IMR-90 (cell line): ENCODE measurements at regions of chr6 and their contacts with region 1.

Region 1: DNA sequence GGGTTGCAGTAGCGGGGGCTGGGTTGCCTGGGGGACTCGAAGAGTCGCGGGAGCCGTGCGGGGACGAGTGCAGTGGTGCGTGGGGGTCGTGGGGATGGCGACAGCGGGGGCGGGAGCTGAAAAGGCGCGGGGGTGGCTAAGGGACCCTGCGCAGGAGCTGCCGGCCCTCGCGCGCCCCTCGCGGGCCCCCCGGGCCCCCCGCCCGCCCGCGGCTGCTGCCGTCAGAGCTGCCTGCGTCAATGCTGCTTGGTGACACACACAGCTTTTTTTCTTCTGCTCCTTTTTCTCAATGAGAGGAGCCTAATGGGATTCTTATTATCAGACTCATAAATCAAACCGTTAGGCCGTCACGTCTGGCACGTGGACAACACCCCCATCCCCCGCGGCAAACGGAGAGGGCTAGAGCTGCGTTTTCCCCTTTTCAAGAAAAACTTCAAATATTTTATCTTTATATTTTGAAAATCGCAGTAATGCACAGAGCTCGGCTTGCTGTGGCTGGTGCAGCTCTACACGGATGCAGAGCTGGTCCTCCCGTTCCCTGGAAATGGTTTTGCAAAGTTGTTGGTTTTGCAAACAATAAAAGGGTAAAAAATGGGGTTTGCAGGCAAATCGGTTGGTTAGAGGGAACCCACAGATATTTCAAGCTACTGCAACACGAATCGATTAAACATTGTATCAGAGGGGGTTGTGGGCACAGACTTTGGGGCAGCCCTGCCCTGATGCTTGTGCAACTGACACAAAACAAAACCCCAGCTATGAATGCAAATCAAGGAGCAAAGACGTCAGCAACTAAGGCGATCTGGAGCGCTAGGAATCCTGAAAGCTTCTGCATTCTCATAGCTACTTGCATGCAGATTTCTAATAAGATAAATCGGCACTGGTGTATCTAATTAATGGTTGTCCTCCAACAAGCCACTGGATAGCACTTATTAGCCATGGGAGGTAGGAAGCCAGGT is 161.4 kb downstream of the TBXT start:
- DNase-seq: peak; percentile 94
- ATAC-seq: peak; percentile 65
- H3K4me3 ChIP-seq: peak overlapping the region; percentile 26
- H3K27ac ChIP-seq: peak overlapping the region; percentile 98
- H3K4me1 ChIP-seq: peaks cover 31% of the 10 kb centered on the region
- H3K27me3 ChIP-seq: no peaks in the 10 kb centered on the region
- CTCF ChIP-seq: no peak
- POLR2A ChIP-seq: no peak; the same call in 1 of the 2 replicates
- RAD21 ChIP-seq: peak; percentile 12; the same call in 1 of the 2 replicates

Region 2: DNA sequence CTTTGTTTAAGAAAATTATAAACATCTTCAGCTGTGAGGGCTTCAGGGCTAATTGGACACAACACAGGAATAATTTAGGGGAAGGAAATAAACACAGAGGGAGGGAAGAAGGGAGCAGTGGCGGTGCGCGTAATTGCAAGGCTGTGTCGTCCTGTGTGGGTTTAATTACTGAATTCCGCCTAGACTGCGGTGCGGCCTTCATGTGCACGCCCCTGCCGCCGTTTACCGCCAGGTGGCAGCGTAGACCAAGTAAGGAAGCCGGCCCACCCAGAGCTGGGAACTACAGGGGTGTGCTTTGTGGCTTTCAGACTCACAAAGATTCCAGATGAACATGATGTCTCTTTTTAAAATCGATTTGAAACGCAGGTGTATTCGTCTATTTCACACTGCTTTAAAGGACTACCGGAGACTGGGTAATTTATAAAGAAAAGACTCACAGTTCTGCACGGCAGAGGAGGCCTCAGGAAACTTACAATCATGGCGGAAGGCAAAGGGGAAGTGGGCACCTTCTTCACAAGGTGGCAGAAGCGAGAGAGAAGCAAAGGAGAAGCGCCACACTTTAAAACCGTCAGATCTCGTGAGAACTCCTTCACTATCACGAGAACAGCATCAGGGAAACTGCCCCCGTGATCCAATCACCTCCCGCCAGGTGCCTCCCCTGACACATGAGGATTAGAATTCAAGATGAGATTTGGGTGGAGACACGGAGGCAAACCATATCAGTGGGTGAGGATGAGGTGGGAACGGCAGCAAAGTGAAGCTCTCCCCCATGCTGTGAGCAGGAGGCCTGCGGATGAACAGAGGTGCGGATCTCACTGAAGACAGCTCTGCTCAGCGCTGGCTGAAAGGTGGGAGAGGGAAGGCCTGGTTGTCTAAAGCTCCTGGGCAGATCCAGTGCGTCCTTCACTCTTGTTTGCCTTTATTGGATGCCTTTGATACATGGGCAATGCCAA is 121.1 kb before region 1 on chr6:
- CTCF ChIA-PET with region 1: interaction called, 3 read pairs
- POLR2A ChIA-PET with region 1: no interaction called
- dilution Hi-C with region 1: no loop called
- in situ Hi-C with region 1: no loop called
- intact Hi-C with region 1: loop called (anchors 2 kb)
- DNase-seq: peak; percentile 68
- ATAC-seq: peak; percentile 96
- H3K4me3 ChIP-seq: no peak overlapping the region
- H3K27ac ChIP-seq: no peak overlapping the region
- H3K4me1 ChIP-seq: peaks cover 7% of the 10 kb centered on the region
- H3K27me3 ChIP-seq: no peaks in the 10 kb centered on the region
- CTCF ChIP-seq: peak; percentile 95
- POLR2A ChIP-seq: peak; percentile 46; the same call in 1 of the 2 replicates
- RAD21 ChIP-seq: peak; percentile 95

Region 3: GRCh38 chr6:165987483-165988301 is 18.5 kb before region 1 on chr6:
- CTCF ChIA-PET with region 1: no interaction called
- POLR2A ChIA-PET with region 1: no interaction called
- dilution Hi-C with region 1: no loop called
- in situ Hi-C with region 1: no loop called
- intact Hi-C with region 1: loop called (anchors 1 kb)
- DNase-seq: peak; percentile 98
- ATAC-seq: peak; percentile 84
- H3K4me3 ChIP-seq: peak overlapping the region; percentile 58
- H3K27ac ChIP-seq: peak overlapping the region; percentile 54
- H3K4me1 ChIP-seq: peaks cover 10% of the 10 kb centered on the region
- H3K27me3 ChIP-seq: no peaks in the 10 kb centered on the region
- CTCF ChIP-seq: peak; percentile 18; the same call in 1 of the 2 replicates
- POLR2A ChIP-seq: peak; percentile 56
- RAD21 ChIP-seq: peak; percentile 31

Region 4: GRCh38 chr6:166026586-166027126 is 20.4 kb after region 1 on chr6:
- CTCF ChIA-PET with region 1: interaction called, 4 read pairs
- POLR2A ChIA-PET with region 1: no interaction called
- dilution Hi-C with region 1: no loop called
- in situ Hi-C with region 1: no loop called
- intact Hi-C with region 1: loop called (anchors 2 kb)
- DNase-seq: no peak
- ATAC-seq: no peak
- H3K4me3 ChIP-seq: no peak overlapping the region
- H3K27ac ChIP-seq: 0 out of 2 replicates have a peak overlapping the region, but pooled peaks have one; percentile 4
- H3K4me1 ChIP-seq: peaks cover 30% of the 10 kb centered on the region
- H3K27me3 ChIP-seq: no peaks in the 10 kb centered on the region
- CTCF ChIP-seq: no peak
- POLR2A ChIP-seq: no peak
- RAD21 ChIP-seq: no peak

Region 5: GRCh38 chr6:166046226-166046625 is 40.0 kb after region 1 on chr6:
- CTCF ChIA-PET with region 1: no interaction called
- POLR2A ChIA-PET with region 1: no interaction called
- dilution Hi-C with region 1: no loop called
- in situ Hi-C with region 1: no loop called
- intact Hi-C with region 1: loop called (anchors 1 kb)
- DNase-seq: peak; percentile 96
- ATAC-seq: peak; percentile 96
- H3K4me3 ChIP-seq: no peak overlapping the region
- H3K27ac ChIP-seq: peak overlapping the region; percentile 85
- H3K4me1 ChIP-seq: peaks cover 13% of the 10 kb centered on the region
- H3K27me3 ChIP-seq: no peaks in the 10 kb centered on the region; the same call in 1 of the 2 replicates
- CTCF ChIP-seq: no peak
- POLR2A ChIP-seq: no peak
- RAD21 ChIP-seq: 0 out of 2 replicates have a peak, but pooled peaks have one; percentile 4

Region 6: GRCh38 chr6:166078294-166078693 is 72.1 kb after region 1 on chr6:
- CTCF ChIA-PET with region 1: no interaction called
- POLR2A ChIA-PET with region 1: no interaction called
- dilution Hi-C with region 1: no loop called
- in situ Hi-C with region 1: no loop called
- intact Hi-C with region 1: loop called (anchors 5 kb)
- DNase-seq: peak; percentile 96
- ATAC-seq: peak; percentile 98
- H3K4me3 ChIP-seq: no peak overlapping the region
- H3K27ac ChIP-seq: no peak overlapping the region
- H3K4me1 ChIP-seq: peaks cover 1% of the 10 kb centered on the region; the same call in 1 of the 2 replicates
- H3K27me3 ChIP-seq: peaks cover 4% of the 10 kb centered on the region; the same call in 1 of the 2 replicates
- CTCF ChIP-seq: no peak
- POLR2A ChIP-seq: no peak; the same call in 1 of the 2 replicates
- RAD21 ChIP-seq: no peak

Region 7: GRCh38 chr6:166097915-166098522 is 91.8 kb after region 1 on chr6:
- CTCF ChIA-PET with region 1: no interaction called
- POLR2A ChIA-PET with region 1: no interaction called
- dilution Hi-C with region 1: no loop called
- in situ Hi-C with region 1: no loop called
- intact Hi-C with region 1: loop called (anchors 1 kb)
- DNase-seq: peak; percentile 82
- ATAC-seq: peak; percentile 99
- H3K4me3 ChIP-seq: peak overlapping the region; percentile 35
- H3K27ac ChIP-seq: peak overlapping the region; percentile 21; the same call in 1 of the 2 replicates
- H3K4me1 ChIP-seq: peaks cover 2% of the 10 kb centered on the region; the same call in 1 of the 2 replicates
- H3K27me3 ChIP-seq: peaks cover 5% of the 10 kb centered on the region
- CTCF ChIP-seq: peak; percentile 95
- POLR2A ChIP-seq: no peak
- RAD21 ChIP-seq: peak; percentile 95

Region 8: DNA sequence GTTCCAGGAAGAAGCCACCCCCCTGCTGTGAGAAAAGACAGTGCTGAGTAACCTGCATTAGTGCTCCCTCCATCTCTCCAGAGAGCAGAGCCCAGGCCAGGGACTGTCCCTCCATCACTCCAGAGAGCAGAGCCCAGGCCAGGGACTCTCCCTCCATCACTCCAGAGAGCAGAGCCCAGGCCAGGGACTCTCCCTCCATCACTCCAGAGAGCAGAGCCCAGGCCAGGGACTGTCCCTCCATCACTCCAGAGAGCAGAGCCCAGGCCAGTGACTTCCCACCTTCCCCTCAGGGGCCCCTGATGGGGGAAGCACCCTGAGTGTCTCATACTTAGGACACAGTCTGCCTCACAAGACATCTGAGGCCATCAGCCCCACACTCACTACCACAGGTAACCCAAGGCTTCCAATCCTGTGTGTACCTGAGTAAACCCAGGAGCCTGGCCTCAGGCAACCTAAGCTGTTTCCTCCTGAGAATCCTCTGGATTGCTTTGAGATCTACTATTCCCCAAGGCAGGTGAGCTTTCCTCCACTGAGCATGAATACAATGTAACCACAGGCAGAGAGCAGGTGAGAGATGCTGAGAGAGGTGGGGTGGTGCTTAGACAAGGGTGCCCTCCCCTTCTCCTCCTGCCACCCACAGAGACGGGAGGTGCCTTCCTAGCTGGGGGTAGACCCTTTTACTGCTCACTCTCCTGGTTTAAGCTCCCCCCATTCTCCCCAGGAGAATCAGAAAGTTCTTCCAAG is 156.5 kb after region 1 on chr6:
- CTCF ChIA-PET with region 1: no interaction called
- POLR2A ChIA-PET with region 1: no interaction called
- dilution Hi-C with region 1: no loop called
- in situ Hi-C with region 1: no loop called
- intact Hi-C with region 1: no loop called
- DNase-seq: no peak
- ATAC-seq: no peak
- H3K4me3 ChIP-seq: no peak overlapping the region
- H3K27ac ChIP-seq: no peak overlapping the region
- H3K4me1 ChIP-seq: no peaks in the 10 kb centered on the region
- H3K27me3 ChIP-seq: peaks cover 40% of the 10 kb centered on the region
- CTCF ChIP-seq: no peak
- POLR2A ChIP-seq: no peak
- RAD21 ChIP-seq: no peak